ENCODE measurements at regions of chr2 and their contacts with region 1.

Region 1: DNA sequence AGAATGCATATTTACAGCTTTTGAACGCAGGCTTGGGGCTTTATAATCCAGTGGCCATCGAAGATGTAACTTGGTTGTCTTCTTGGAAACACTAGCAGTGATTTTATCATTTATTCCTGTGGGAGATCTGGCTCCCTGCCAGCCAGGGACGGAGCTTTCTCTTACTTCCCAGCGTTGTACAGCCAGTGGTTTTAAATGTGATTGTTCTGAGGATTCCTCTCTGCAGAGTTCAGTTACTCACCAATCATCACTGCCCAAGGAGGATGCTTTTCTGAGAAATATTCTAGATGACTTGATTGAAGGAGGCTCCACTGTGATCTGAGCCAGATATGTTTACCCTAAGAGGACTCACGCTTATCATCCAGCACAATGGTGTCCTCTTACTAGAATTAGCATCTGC is 744.3 kb downstream of the RNF144A start:
- DNase-seq: no peak
- H3K4me3 ChIP-seq: no peak overlapping the region
- H3K27ac ChIP-seq: no peak overlapping the region
- H3K4me1 ChIP-seq: peaks cover 0 to 5% of the 10 kb centered on the region in 2 experiments; a peak in 1 of 4 replicates
- H3K27me3 ChIP-seq: no peaks in the 10 kb centered on the region
- CTCF ChIP-seq: no peak
- EP300 ChIP-seq: no peak
- RAD21 ChIP-seq: no peak

Region 2: GRCh38 chr2:7672027-7672684 is 10.7 kb after region 1 on chr2:
- CTCF ChIA-PET with region 1: interaction called, 14 read pairs
- POLR2A ChIA-PET with region 1: no interaction called
- DNase-seq: peak; percentile 49
- H3K4me3 ChIP-seq: peak overlapping the region in 1 of 2 experiments; percentile 39; a peak in 1 of 4 replicates
- H3K27ac ChIP-seq: no peak overlapping the region
- H3K4me1 ChIP-seq: no peaks in the 10 kb centered on the region; a peak in 1 of 4 replicates
- H3K27me3 ChIP-seq: no peaks in the 10 kb centered on the region
- CTCF ChIP-seq: peak; percentile 65
- EP300 ChIP-seq: no peak
- RAD21 ChIP-seq: peak; percentile 74